HepG2 (cell line): ENCODE measurements at regions of chr3 and their contacts with region 1.

Region 1: GRCh38 chr3:129934234-129935123 is 40.0 kb upstream of the TRH start:
- DNase-seq: peak; percentile 23
- ATAC-seq: peak; percentile 51
- H3K4me3 ChIP-seq: peak overlapping the region; percentile 23 to 53 (median 44)
- H3K27ac ChIP-seq: no peak overlapping the region
- H3K4me1 ChIP-seq: peaks cover 45% of the 10 kb centered on the region
- H3K27me3 ChIP-seq: 0 out of 5 replicates have a peak, but pooled peaks cover 0 to 9% of the 10 kb centered on the region in 2 experiments
- CTCF ChIP-seq: peak; percentile 89
- EP300 ChIP-seq: no peak
- POLR2A ChIP-seq: no peak
- RAD21 ChIP-seq: peak; percentile 77

Region 2: GRCh38 chr3:129645290-129645689 is 289.2 kb before region 1 on chr3:
- CTCF ChIA-PET with region 1: no interaction called
- POLR2A ChIA-PET with region 1: no interaction called
- in situ Hi-C with region 1: loop called (anchors 10 kb)
- intact Hi-C with region 1: loop called (anchors 5 kb)
- DNase-seq: no peak
- ATAC-seq: no peak
- H3K4me3 ChIP-seq: no peak overlapping the region
- H3K27ac ChIP-seq: no peak overlapping the region
- H3K4me1 ChIP-seq: peaks cover 31% of the 10 kb centered on the region
- H3K27me3 ChIP-seq: no peaks in the 10 kb centered on the region
- CTCF ChIP-seq: no peak
- EP300 ChIP-seq: no peak
- POLR2A ChIP-seq: no peak
- RAD21 ChIP-seq: no peak

Region 3: GRCh38 chr3:129824926-129825541 is 109.4 kb before region 1 on chr3:
- CTCF ChIA-PET with region 1: interaction called, 3 read pairs
- POLR2A ChIA-PET with region 1: no interaction called
- in situ Hi-C with region 1: loop called (anchors 10 kb)
- intact Hi-C with region 1: loop called (anchors 1 kb)
- DNase-seq: peak; percentile 62
- ATAC-seq: peak; percentile 75
- H3K4me3 ChIP-seq: no peak overlapping the region
- H3K27ac ChIP-seq: no peak overlapping the region
- H3K4me1 ChIP-seq: peaks cover 20% of the 10 kb centered on the region
- H3K27me3 ChIP-seq: no peaks in the 10 kb centered on the region
- CTCF ChIP-seq: peak; percentile 83
- EP300 ChIP-seq: no peak
- POLR2A ChIP-seq: no peak
- RAD21 ChIP-seq: peak; percentile 72

Region 4: GRCh38 chr3:129881231-129881630 is 53.2 kb before region 1 on chr3:
- CTCF ChIA-PET with region 1: no interaction called
- POLR2A ChIA-PET with region 1: no interaction called
- in situ Hi-C with region 1: no loop called
- intact Hi-C with region 1: no loop called
- DNase-seq: no peak
- ATAC-seq: no peak
- H3K4me3 ChIP-seq: no peak overlapping the region
- H3K27ac ChIP-seq: no peak overlapping the region
- H3K4me1 ChIP-seq: no peaks in the 10 kb centered on the region
- H3K27me3 ChIP-seq: no peaks in the 10 kb centered on the region
- CTCF ChIP-seq: no peak
- EP300 ChIP-seq: no peak
- POLR2A ChIP-seq: no peak
- RAD21 ChIP-seq: no peak

Region 5: DNA sequence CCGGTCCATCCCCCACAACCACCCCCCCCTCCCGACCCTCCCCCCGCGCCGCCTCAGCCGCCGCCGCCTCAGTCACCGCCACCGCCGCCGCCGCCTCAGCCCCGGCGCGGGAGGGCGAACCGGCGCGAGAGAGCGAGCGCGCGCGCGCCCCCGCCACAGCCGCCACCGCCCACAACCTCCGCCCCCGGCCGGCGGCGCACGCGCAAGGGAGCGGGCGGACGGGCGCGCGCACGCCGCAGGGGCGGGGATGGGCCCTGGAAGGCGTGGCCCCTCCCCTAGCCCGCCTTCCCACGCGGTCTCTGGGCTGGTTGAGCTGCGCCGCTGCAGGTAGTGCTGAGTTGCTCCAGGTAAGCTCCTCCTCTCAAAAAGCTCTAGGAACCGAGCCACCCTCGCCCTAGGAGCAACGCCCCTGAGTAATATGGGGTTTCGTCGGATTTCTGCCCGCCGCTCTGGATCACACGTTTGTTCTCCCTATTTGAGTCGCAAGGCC is 40.9 kb before region 1 on chr3 and contains the start of gene TMCC1:
- CTCF ChIA-PET with region 1: no interaction called
- POLR2A ChIA-PET with region 1: no interaction called
- in situ Hi-C with region 1: no loop called
- intact Hi-C with region 1: loop called (anchors 5 kb)
- DNase-seq: peak; percentile 80
- ATAC-seq: peak; percentile 88
- H3K4me3 ChIP-seq: peak within 1 kb of the TSS; percentile 78 to 88 (median 88)
- H3K27ac ChIP-seq: peak within 1 kb of the TSS; percentile 87
- H3K4me1 ChIP-seq: peaks cover 47% of the 10 kb centered on the region
- H3K27me3 ChIP-seq: no peaks in the 10 kb centered on the region; a peak in 1 of 5 replicates
- CTCF ChIP-seq: peak; percentile 11; the same call in 1 of the 2 replicates
- EP300 ChIP-seq: no peak
- POLR2A ChIP-seq: peak; percentile 55 to 83
- RAD21 ChIP-seq: no peak
- total RNA-seq, gene TMCC1: 12.1 and 14.8 TPM in 2 replicates